Upper lobe of right lung (tissue), 1 donor: ENCODE measurements at regions of chr20 and their contacts with region 1.

Region 1: GRCh38 chr20:36199345-36200257 is 36.7 kb upstream of the AAR2 start:
- DNase-seq: peak; percentile 74
- ATAC-seq: peak; percentile 88
- H3K4me3 ChIP-seq: no peak overlapping the region
- H3K27ac ChIP-seq: peak overlapping the region; percentile 24
- H3K4me1 ChIP-seq: peaks cover 5% of the 10 kb centered on the region
- H3K27me3 ChIP-seq: no peaks in the 10 kb centered on the region
- CTCF ChIP-seq: peak; percentile 96

Region 2: GRCh38 chr20:36035745-36036144 is 163.9 kb before region 1 on chr20:
- intact Hi-C with region 1: no loop called
- DNase-seq: no peak
- ATAC-seq: no peak
- H3K4me3 ChIP-seq: no peak overlapping the region
- H3K27ac ChIP-seq: no peak overlapping the region
- H3K4me1 ChIP-seq: no peaks in the 10 kb centered on the region
- H3K27me3 ChIP-seq: no peaks in the 10 kb centered on the region
- CTCF ChIP-seq: no peak

Region 3: GRCh38 chr20:36314734-36315541 is 115.3 kb after region 1 on chr20:
- intact Hi-C with region 1: no loop called
- DNase-seq: peak; percentile 43
- ATAC-seq: no peak
- H3K4me3 ChIP-seq: no peak overlapping the region
- H3K27ac ChIP-seq: no peak overlapping the region
- H3K4me1 ChIP-seq: no peaks in the 10 kb centered on the region
- H3K27me3 ChIP-seq: peaks cover 36% of the 10 kb centered on the region
- CTCF ChIP-seq: no peak

Region 4: DNA sequence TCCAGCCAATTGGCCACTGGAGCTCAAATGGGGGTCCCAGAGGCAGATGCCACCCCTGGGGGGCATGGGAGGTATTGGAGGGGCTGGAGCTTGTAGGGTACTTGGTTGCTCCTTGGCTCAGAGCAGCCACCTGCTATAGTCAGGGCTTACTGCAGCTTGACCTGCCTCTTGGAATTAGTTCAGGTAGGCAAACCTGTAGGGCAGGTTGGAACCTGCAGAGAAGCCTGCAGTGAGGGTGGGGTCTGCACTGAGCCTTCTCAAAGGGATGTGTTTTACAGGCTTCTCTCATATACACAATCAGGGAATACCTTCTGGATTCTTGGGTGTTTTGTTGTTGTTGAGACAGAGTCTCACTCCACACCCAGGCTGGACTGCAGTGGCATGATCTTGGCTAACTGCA is 247.5 kb after region 1 on chr20:
- intact Hi-C with region 1: loop called (anchors 10 kb)
- DNase-seq: no peak
- ATAC-seq: peak; percentile 55
- H3K4me3 ChIP-seq: no peak overlapping the region
- H3K27ac ChIP-seq: no peak overlapping the region
- H3K4me1 ChIP-seq: no peaks in the 10 kb centered on the region
- H3K27me3 ChIP-seq: no peaks in the 10 kb centered on the region
- CTCF ChIP-seq: no peak